ENCODE measurements at regions of chr19 and their contacts with region 1.

Region 1: DNA sequence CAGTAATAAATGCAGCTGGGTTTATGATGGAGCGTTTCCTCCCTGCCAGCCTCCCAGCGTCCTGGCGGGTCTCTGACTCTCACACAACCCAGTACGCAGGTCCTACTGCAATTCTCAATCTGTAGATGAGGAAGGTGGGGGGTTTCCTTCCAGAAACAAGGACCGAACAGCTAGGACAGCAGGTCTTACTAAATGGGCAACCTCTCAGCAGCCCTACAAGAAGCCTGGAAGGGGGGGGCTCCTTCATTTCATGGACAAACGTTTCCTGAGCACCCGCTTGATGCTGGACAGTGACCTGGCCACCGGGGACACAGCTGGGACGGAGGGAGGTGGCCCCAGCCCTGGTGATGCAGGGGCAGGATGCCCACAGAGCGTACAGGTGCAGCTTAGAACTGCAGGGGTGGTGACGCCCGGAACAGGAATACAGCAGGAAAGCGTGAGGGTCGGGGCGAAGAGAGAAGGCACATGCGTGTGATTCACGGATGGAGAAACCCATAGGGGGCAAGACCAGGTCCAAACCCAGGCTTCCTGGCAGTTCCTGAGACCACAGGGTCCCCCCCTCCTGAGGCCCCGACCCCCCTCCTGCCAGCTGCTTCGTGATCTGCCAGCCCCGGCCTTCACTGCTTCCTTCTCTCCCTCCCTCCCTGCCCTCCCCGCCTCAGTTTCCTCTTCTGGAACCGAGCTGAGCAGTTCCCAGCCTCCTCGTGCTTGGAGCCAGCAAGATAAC is 732 bp upstream of the C2CD4C start:
- DNase-seq: no peak
- H3K4me3 ChIP-seq: peak overlapping the region in 1 of 3 experiments; percentile 20
- H3K27ac ChIP-seq: no peak overlapping the region
- H3K4me1 ChIP-seq: peaks cover 6% of the 10 kb centered on the region
- H3K27me3 ChIP-seq: peaks cover 19% of the 10 kb centered on the region
- CTCF ChIP-seq: no peak

Region 2: GRCh38 chr19:449916-450315 is 40.2 kb after region 1 on chr19:
- CTCF ChIA-PET with region 1: no interaction called
- dilution Hi-C with region 1: loop called (anchors 5 kb)
- in situ Hi-C with region 1: no loop called
- intact Hi-C with region 1: no loop called
- DNase-seq: no peak
- H3K4me3 ChIP-seq: no peak overlapping the region
- H3K27ac ChIP-seq: no peak overlapping the region
- H3K4me1 ChIP-seq: no peaks in the 10 kb centered on the region
- H3K27me3 ChIP-seq: no peaks in the 10 kb centered on the region
- CTCF ChIP-seq: no peak

Region 3: GRCh38 chr19:459724-460511 is 50.2 kb after region 1 on chr19:
- CTCF ChIA-PET with region 1: no interaction called
- dilution Hi-C with region 1: no loop called
- in situ Hi-C with region 1: no loop called
- intact Hi-C with region 1: no loop called
- DNase-seq: no peak
- H3K4me3 ChIP-seq: peak overlapping the region; percentile 39 to 67 (median 57)
- H3K27ac ChIP-seq: no peak overlapping the region
- H3K4me1 ChIP-seq: peaks cover 6% of the 10 kb centered on the region
- H3K27me3 ChIP-seq: peaks cover 4% of the 10 kb centered on the region
- CTCF ChIP-seq: no peak

Region 4: GRCh38 chr19:778910-779653 is 369.4 kb after region 1 on chr19:
- CTCF ChIA-PET with region 1: no interaction called
- dilution Hi-C with region 1: no loop called
- in situ Hi-C with region 1: no loop called
- intact Hi-C with region 1: no loop called
- DNase-seq: peak; percentile 95
- H3K4me3 ChIP-seq: no peak overlapping the region
- H3K27ac ChIP-seq: peak overlapping the region; percentile 11
- H3K4me1 ChIP-seq: peaks cover 14% of the 10 kb centered on the region
- H3K27me3 ChIP-seq: no peaks in the 10 kb centered on the region
- CTCF ChIP-seq: no peak